Left lung (tissue), 14 donors: ENCODE measurements at regions of chr17 and their contacts with region 1.

Region 1: DNA sequence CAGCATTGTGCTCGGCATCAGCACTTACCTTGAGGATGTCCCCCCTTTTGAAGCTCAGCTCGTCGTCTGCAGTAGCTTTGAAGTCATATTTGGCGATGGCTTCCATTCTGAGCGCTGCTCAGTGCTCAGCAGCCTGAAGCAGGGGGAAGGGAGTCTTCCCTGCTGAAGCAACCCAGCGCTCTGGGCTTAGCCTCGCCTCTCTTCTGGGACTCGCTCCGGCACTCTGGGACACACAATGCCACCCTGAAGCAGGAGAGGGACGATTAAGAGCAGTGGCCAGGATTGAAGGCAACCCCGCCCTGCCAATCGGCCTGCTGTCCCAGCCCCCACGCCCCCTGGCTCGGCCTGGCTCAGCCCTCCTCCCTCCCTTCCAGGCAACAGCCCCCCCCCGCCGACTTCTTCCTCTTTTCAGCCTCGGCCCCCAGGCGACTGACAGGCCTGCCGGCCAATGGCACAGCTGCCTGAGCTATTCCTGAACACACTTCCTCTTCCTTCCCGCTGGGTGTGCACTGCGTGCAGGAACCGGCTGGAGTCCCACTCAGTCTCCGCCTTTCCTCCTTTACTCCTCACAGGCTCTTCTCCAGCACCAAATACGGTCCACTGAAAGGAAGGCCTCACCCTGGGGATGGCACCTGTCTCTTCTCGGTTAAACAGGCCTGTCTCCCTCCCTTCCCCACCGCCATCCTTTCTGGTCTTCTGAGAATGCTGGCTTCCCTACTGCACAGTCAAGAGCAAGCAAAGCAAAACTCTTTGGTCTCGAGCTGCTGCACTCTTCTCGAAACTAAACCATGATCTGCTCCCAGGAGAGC is 11.8 kb downstream of the GRB2 start:
- DNase-seq: peak; percentile 97 to 99 (median 98)
- ATAC-seq: peak; percentile 100
- H3K4me3 ChIP-seq: peak overlapping the region; percentile 44 to 51
- H3K27ac ChIP-seq: peak overlapping the region; percentile 80 to 82
- H3K4me1 ChIP-seq: peaks cover 21 to 94% of the 10 kb centered on the region in 2 donors
- H3K27me3 ChIP-seq: no peaks in the 10 kb centered on the region
- CTCF ChIP-seq: peak in 1 of 2 donors; percentile 35

Region 2: DNA sequence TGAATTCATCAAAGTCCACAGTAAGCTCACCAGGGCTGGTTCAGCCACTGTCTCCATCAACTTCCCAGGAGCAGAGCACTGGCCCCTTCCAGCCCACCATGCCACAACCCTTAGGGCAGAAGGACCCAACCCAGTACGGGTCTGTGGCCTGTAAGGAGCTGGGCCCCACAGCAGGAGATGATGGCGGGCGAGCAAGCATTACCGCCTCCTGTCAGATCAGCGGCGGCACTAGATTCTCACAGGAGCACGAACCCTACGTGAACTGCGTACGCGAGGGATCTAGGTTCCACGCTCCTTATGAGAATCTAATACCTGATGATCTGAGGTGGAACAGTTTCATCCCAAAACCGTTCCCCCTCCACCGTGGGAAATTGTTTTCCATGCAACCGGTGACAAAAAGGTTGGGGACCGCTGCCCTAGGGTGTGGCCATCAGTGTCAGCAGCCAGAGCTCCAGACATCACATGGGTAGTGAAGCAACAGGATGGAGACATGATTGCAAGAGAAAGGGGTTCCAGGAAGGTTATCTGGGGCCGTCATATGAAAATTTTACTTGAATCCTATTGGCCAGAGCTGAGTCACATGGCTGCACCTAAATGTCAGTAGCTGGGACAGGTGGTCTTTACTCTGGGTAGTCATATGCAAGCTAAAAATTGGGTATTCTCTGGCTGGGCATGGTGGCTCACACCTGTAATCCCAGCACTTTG is 92.1 kb before region 1 on chr17:
- intact Hi-C with region 1: no loop called
- DNase-seq: no peak
- ATAC-seq: peak; percentile 50
- H3K4me3 ChIP-seq: no peak overlapping the region
- H3K27ac ChIP-seq: peak overlapping the region in 1 of 2 donors; percentile 64
- H3K4me1 ChIP-seq: peaks cover 0 to 53% of the 10 kb centered on the region in 2 donors
- H3K27me3 ChIP-seq: no peaks in the 10 kb centered on the region
- CTCF ChIP-seq: no peak

Region 3: GRCh38 chr17:75345514-75346167 is 48.1 kb before region 1 on chr17:
- intact Hi-C with region 1: loop called in 1 of 2 experiments (anchors 10 kb)
- DNase-seq: no peak
- ATAC-seq: peak; percentile 29
- H3K4me3 ChIP-seq: no peak overlapping the region
- H3K27ac ChIP-seq: peak overlapping the region in 1 of 2 donors; percentile 59
- H3K4me1 ChIP-seq: peaks cover 13 to 100% of the 10 kb centered on the region in 2 donors
- H3K27me3 ChIP-seq: no peaks in the 10 kb centered on the region
- CTCF ChIP-seq: no peak

Region 4: DNA sequence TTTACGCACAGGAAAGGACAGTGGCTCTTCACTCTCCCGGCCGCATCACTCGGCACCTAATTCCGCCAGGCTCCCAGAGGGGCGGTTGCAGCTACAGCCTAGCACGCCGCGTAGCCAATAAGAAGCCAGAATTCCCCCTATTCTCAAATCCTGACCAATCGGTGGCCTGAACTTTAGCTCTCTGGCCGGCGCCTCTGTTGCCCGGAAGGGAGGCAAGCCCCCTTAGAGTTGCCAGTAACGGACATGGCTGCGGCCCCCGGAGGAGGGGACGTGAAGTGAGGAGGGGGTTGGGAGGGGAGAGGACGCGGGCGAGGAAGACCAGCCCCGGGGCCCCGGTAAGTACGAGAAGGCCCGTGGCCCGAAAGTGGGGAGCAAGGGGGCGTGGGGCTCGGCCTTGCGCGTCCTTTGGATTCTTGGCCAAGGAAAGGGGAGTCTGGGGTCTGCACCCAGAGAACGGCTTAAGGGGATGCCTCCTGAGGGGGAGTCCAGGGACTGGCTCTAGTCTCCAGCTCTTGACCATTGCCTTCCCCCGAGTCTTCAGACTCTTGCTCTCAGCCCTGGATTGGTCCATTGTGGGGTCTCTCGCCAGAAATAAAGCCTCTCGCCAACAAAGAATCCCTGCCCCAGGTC is 62.8 kb after region 1 on chr17 and contains the start of gene TMEM94:
- intact Hi-C with region 1: no loop called
- DNase-seq: peak; percentile 94 to 98 (median 96)
- ATAC-seq: peak; percentile 97
- H3K4me3 ChIP-seq: peak within 1 kb of the TSS; percentile 82 to 89
- H3K27ac ChIP-seq: peak within 1 kb of the TSS; percentile 74 to 92
- H3K4me1 ChIP-seq: peaks cover 4 to 47% of the 10 kb centered on the region in 2 donors
- H3K27me3 ChIP-seq: no peaks in the 10 kb centered on the region
- CTCF ChIP-seq: no peak
- polyA plus RNA-seq, gene TMEM94: 68.5 to 91.7 (median 83.1) TPM